HCT116 (cell line): ENCODE measurements at regions of chr15 and their contacts with region 1.

Region 1: GRCh38 chr15:36501063-36501678 is 78.3 kb upstream of the CDIN1 start:
- DNase-seq: peak; percentile 69
- ATAC-seq: peak; percentile 100
- H3K4me3 ChIP-seq: no peak overlapping the region
- H3K27ac ChIP-seq: peak overlapping the region; percentile 30; the same call in 1 of the 2 replicates
- H3K4me1 ChIP-seq: peaks cover 6 to 11% of the 10 kb centered on the region in 2 experiments; a peak in 3 of 4 replicates
- H3K27me3 ChIP-seq: no peaks in the 10 kb centered on the region
- CTCF ChIP-seq: peak; percentile 44 to 85 (median 83); a peak in 5 of 6 replicates
- POLR2A ChIP-seq: no peak
- RAD21 ChIP-seq: peak; percentile 84

Region 2: GRCh38 chr15:35519541-35520149 is 981.5 kb before region 1 on chr15:
- CTCF ChIA-PET with region 1: no interaction called
- POLR2A ChIA-PET with region 1: no interaction called
- RAD21 ChIA-PET with region 1: no interaction called
- intact Hi-C with region 1: loop called (anchors 1 kb)
- DNase-seq: peak; percentile 28
- ATAC-seq: peak; percentile 75; the same call in 1 of the 2 replicates
- H3K4me3 ChIP-seq: no peak overlapping the region
- H3K27ac ChIP-seq: no peak overlapping the region
- H3K4me1 ChIP-seq: peaks cover 0 to 2% of the 10 kb centered on the region in 2 experiments; a peak in 1 of 4 replicates
- H3K27me3 ChIP-seq: no peaks in the 10 kb centered on the region
- CTCF ChIP-seq: peak; percentile 27 to 77 (median 46); a peak in 5 of 6 replicates
- POLR2A ChIP-seq: no peak
- RAD21 ChIP-seq: peak; percentile 68

Region 3: GRCh38 chr15:36544518-36545466 is 43.6 kb after region 1 on chr15:
- CTCF ChIA-PET with region 1: no interaction called
- POLR2A ChIA-PET with region 1: no interaction called
- RAD21 ChIA-PET with region 1: no interaction called
- intact Hi-C with region 1: no loop called
- DNase-seq: no peak
- ATAC-seq: no peak
- H3K4me3 ChIP-seq: no peak overlapping the region
- H3K27ac ChIP-seq: no peak overlapping the region
- H3K4me1 ChIP-seq: no peaks in the 10 kb centered on the region
- H3K27me3 ChIP-seq: no peaks in the 10 kb centered on the region
- CTCF ChIP-seq: no peak
- POLR2A ChIP-seq: no peak
- RAD21 ChIP-seq: no peak

Region 4: DNA sequence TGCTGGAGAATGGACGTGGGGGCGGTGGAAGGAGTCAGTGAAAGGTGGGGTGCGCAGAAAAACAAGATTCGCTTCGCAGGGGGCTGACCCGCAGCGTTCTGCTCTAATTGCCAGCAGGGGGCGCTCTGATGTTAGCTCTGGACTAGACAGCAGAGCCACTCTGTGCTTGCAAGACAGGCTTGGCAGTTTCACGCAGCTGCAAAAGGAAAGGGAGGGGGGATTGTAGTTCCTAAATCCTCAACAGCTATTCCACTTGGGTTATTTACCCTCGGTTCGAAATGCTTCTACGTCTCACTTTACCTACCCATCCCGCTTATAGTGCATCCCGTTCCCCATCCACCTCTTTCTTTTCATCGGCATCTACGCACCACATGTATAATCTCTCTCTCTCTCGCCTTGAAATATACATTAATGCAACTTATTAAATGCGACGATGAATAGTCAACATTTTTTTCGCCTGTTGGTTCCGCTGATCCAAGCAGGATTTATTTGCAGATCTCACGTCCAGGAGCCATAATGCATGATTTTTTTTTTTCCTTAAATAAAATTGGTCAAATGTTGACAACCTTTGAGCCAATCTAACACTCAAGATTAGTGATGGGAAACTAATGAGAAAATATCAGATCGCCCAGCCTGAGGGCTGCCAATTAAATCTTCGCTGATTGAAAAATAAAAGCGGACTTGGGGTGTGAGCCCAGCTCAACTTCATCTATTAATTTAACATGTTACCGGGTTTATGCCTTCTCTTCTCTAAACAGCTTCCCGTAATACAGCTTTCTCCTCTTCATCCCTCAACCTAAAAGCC is 382.7 kb after region 1 on chr15:
- CTCF ChIA-PET with region 1: no interaction called
- POLR2A ChIA-PET with region 1: no interaction called
- RAD21 ChIA-PET with region 1: no interaction called
- intact Hi-C with region 1: loop called (anchors 5 kb)
- DNase-seq: peak; percentile 63
- ATAC-seq: peak; percentile 99
- H3K4me3 ChIP-seq: no peak overlapping the region
- H3K27ac ChIP-seq: no peak overlapping the region
- H3K4me1 ChIP-seq: no peaks in the 10 kb centered on the region
- H3K27me3 ChIP-seq: no peaks in the 10 kb centered on the region
- CTCF ChIP-seq: peak; percentile 57 to 85 (median 85); a peak in 5 of 6 replicates
- POLR2A ChIP-seq: no peak
- RAD21 ChIP-seq: peak; percentile 82

Region 5: DNA sequence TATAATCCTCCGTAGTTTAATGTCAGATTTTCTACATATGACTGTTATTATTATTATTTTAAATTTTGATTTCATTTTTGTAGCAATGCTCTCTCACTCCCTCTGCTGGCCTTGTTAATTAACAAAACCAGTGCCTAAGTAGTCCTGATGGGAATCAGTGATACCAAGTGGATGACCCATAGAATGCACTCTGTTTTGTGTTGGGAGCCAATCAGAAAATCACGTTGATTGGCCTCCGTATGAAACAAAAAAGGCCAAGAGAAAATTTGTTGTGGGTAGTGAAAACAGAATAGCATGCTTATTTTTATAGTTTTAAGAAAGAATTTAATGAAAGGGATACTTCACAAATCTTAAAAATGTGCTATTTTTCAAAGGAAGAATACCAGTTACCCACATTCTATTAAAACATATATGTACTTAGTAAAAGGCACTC is 633.5 kb after region 1 on chr15:
- CTCF ChIA-PET with region 1: interaction called, 4 read pairs
- POLR2A ChIA-PET with region 1: no interaction called
- RAD21 ChIA-PET with region 1: no interaction called
- intact Hi-C with region 1: loop called (anchors 2 kb)
- DNase-seq: peak; percentile 54
- ATAC-seq: peak; percentile 91
- H3K4me3 ChIP-seq: no peak overlapping the region
- H3K27ac ChIP-seq: no peak overlapping the region
- H3K4me1 ChIP-seq: no peaks in the 10 kb centered on the region
- H3K27me3 ChIP-seq: no peaks in the 10 kb centered on the region
- CTCF ChIP-seq: peak; percentile 59 to 63 (median 61); a peak in 5 of 6 replicates
- POLR2A ChIP-seq: no peak
- RAD21 ChIP-seq: peak; percentile 35; the same call in 1 of the 2 replicates